Ascending aorta (tissue), 2 donors: ENCODE measurements at regions of chr14 and their contacts with region 1.

Region 1: GRCh38 chr14:23320774-23321571 is at the start of gene PABPN1:
- DNase-seq: peak; percentile 98 to 100
- H3K4me3 ChIP-seq: peak within 1 kb of the TSS; percentile 98 to 99
- H3K27ac ChIP-seq: peak within 1 kb of the TSS; percentile 98 to 99
- H3K4me1 ChIP-seq: peaks cover 5 to 16% of the 10 kb centered on the region in 2 donors
- H3K27me3 ChIP-seq: no peaks in the 10 kb centered on the region
- CTCF ChIP-seq: no peak
- total RNA-seq, gene PABPN1: 90.6 TPM

Region 2: DNA sequence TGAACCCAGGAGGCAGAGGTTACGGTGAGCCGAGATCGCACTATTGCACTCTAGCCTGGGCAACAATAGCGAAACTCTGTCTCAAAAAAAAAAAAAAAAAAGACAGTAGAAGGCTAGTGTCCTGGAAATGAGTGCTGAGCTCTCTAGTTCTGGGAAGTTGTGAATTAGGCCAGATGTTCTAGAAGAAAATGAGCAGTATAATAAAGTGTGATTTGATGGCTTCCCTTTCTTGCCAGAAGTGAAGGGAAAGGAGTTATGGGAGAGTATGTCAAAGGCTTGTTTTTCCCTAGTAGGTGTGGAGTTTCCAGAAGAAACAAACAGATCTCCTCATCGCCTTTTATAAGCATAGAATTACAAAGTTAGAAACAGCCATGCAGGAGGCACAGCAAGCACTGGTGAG is 62.7 kb before region 1 on chr14:
- intact Hi-C with region 1: no loop called
- DNase-seq: no peak
- H3K4me3 ChIP-seq: no peak overlapping the region
- H3K27ac ChIP-seq: no peak overlapping the region
- H3K4me1 ChIP-seq: no peaks in the 10 kb centered on the region
- H3K27me3 ChIP-seq: no peaks in the 10 kb centered on the region
- CTCF ChIP-seq: no peak

Region 3: DNA sequence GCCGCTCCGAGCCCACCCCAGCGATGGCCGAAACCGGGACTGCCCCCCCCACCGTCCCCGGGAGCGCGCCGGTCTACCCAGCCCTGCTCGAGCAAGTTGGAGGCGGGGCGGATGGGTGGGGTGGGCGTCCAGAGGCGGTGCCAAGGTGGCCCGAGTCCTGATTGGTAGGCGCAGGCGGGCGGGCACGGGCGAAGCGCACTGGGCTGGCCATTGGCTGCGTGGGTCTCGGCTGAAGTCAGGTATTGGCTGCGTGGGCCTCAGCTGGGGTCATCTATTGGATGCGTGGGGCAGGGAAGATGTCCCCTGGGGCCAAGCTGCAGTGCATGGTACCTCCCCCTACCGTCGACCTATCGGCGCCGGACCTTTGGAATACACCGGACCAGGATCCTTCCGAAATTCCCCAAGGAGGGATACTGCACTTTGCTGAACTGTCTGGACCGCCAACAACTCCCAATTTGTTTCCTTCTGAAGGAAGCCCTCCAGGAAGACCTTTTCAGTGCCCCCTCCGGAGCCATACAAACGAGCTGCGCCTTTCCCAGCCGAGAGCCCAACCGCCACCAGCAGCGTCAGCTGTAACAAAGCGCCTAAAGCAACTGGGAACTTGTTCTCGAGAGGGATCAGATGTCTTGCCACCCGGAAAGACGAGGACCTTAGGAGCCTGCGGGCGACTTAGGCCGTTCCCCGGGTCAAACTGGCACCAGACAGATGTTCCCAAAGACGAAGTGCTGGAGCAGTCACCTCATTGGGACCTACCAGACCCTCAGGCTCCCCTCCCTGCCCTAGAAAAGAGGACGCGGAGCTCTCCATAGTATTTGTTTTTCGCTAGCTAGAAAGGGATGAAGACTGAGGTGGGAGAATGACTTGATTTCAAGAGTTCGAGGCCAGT is 34.7 kb before region 1 on chr14 and contains the start of gene HOMEZ:
- intact Hi-C with region 1: loop called (anchors 1 kb)
- DNase-seq: peak; percentile 99 to 100
- H3K4me3 ChIP-seq: peak within 1 kb of the TSS; percentile 78 to 100
- H3K27ac ChIP-seq: peak within 1 kb of the TSS; percentile 95 to 99
- H3K4me1 ChIP-seq: peaks cover 0 to 11% of the 10 kb centered on the region in 2 donors
- H3K27me3 ChIP-seq: no peaks in the 10 kb centered on the region
- CTCF ChIP-seq: peak in 2 of 3 experiments; percentile 10
- total RNA-seq, gene HOMEZ: 7.3 TPM

Region 4: DNA sequence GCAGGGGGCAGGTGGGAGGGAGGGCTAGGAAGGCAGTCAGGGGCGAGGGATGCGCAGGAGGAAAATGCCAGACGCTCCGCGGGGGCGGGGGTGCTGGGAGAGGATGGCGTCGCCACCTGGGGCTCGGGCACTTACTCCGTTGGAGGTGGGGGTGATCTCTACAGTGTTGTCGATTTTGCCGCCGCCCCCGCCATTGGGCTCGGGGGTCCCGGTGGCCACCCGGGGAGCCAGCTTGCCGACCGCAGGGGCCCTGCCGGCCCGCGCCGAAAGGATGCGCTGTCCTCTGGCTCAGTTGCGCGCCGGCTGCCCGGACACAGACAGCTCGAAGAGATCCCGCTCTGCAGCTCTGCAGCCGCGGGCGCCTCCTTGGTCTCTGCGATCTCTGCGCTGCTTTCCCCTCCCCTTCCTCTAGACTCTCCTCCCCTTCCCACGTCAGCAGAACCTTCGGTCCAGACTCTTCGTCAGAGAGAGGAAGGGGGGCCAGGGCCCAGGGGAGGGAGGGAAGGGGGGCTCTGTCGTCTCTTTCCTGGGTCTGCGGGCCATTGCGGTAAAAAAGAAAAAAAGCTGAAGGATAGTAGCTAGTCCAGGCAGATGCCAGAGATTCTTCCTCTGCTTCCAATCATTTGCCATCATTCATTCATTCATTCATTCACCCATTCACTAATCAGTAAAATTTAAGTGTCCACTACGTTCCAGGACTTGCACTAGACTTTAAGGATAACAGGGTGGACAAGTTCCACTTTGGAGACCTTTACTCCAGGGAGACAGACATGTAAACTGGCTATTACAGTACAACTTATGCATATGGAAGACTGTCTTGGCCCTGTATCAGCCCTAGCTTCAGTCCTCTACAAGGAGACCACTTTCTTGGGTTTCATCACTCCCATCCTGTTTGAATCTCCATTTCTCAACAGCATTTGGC is 31.8 kb after region 1 on chr14 and contains the start of gene SLC22A17:
- intact Hi-C with region 1: loop called (anchors 2 kb)
- DNase-seq: peak in 1 of 2 donors; percentile 91
- H3K4me3 ChIP-seq: peak within 1 kb of the TSS; percentile 69 to 81
- H3K27ac ChIP-seq: peak within 1 kb of the TSS in 1 of 2 donors; percentile 24
- H3K4me1 ChIP-seq: peaks cover 4 to 9% of the 10 kb centered on the region in 2 donors
- H3K27me3 ChIP-seq: no peaks in the 10 kb centered on the region
- CTCF ChIP-seq: peak in 1 of 3 experiments; percentile 13
- total RNA-seq, gene SLC22A17: 89.7 TPM

Region 5: GRCh38 chr14:23469127-23469905 is 148.3 kb after region 1 on chr14 and contains the start of gene NGDN:
- intact Hi-C with region 1: loop called (anchors 1 kb)
- DNase-seq: peak; percentile 89 to 99
- H3K4me3 ChIP-seq: peak within 1 kb of the TSS; percentile 87 to 94
- H3K27ac ChIP-seq: peak within 1 kb of the TSS; percentile 83 to 85
- H3K4me1 ChIP-seq: peaks cover 0 to 7% of the 10 kb centered on the region in 2 donors
- H3K27me3 ChIP-seq: no peaks in the 10 kb centered on the region
- CTCF ChIP-seq: peak; percentile 79 to 85 (median 82)
- total RNA-seq, gene NGDN: 7.8 TPM

Region 6: DNA sequence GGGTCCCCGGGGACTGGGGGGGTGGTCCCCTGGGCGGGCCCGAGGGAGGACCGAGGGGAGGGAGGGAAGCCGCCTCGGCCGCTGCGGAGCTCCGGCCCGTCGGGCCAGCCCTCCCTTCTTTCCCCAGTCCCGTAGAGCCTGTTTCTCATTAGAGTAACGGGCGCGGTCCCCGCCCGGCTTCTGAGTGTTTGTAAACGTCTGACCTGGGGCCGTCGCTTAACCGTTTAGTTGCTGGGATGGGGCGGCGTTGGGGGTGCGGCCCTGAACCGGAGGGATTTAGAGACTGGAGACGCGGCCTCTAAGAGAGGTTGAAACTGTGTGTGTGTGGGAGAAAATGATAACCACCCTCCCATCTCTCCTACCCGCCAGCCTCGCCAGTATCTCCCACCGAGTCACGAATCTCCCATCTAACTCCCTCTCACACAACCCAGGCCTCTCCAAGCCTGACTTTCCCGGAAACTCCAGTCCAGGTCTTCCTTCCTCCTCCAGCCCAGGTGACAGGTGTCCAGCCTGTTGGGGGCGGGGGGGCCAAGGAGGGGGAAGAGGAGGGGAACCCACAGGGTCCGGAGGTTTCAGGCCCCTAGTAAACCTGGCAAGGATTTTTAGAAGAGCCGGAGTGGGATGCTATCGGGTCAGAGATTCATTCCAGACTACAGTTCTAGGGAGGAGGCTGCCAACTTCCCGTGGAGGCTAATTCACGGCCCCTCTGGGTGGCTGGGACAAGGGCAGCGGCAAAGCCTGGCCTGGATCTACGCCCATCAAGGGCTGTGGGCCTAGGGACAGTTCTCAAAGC is 1045.9 kb after region 1 on chr14:
- intact Hi-C with region 1: loop called (anchors 10 kb)
- DNase-seq: peak; percentile 65 to 96
- H3K4me3 ChIP-seq: peak overlapping the region; percentile 67 to 78
- H3K27ac ChIP-seq: peak overlapping the region; percentile 96 to 99
- H3K4me1 ChIP-seq: peaks cover 6 to 18% of the 10 kb centered on the region in 2 donors
- H3K27me3 ChIP-seq: no peaks in the 10 kb centered on the region
- CTCF ChIP-seq: no peak